H1 (cell line): ENCODE measurements at regions of chr17 and their contacts with region 1.

Region 1: GRCh38 chr17:6479622-6480302 is 35.5 kb downstream of the PIMREG start:
- DNase-seq: no peak
- H3K4me3 ChIP-seq: no peak overlapping the region
- H3K27ac ChIP-seq: no peak overlapping the region
- H3K4me1 ChIP-seq: 0 out of 7 replicates have a peak, but pooled peaks cover 0 to 2% (median 1%) of the 10 kb centered on the region in 4 experiments
- H3K27me3 ChIP-seq: no peaks in the 10 kb centered on the region
- CTCF ChIP-seq: no peak
- EP300 ChIP-seq: no peak
- POLR2A ChIP-seq: no peak
- RAD21 ChIP-seq: no peak

Region 2: DNA sequence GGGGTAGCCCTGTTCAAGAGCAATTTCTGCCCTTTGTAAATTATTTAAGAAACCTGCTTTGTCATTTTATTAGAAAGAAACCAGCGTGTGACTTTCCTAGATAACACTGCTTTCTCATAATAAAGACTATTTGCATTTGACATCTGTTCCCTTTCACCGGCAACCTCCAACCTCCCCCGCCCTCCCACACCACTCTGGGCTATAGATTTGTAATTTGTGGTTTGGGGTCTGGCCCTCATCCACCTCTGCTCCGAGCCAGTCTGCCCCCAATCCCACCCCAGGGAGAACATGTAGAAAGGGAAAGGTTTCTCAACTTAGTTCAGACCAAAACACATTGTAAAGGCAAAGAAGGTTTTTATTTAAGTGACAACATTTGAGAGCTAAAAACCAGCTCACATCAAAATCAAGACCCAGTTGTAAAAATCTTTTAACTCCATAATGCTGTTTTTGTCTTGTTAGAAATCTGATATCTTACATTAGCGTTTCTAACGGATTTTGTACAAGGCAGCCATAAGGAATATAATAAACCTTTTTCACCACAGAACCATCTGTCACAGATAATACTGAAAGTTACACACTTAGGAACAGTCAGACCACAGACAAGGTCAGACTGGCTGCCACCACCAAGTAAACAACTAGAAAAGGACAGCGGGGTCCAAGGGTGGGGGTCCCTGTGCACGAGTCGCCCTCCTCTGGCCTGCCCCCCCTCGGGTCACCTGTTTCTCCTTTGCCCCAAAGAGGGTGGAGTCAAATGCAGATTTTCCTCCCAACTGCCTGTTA is 28.6 kb before region 1 on chr17:
- CTCF ChIA-PET with region 1: no interaction called
- POLR2A ChIA-PET with region 1: no interaction called
- DNase-seq: no peak
- H3K4me3 ChIP-seq: 0 out of 8 replicates have a peak overlapping the region, but pooled peaks of 1 of the 4 experiments have one; percentile 0
- H3K27ac ChIP-seq: no peak overlapping the region
- H3K4me1 ChIP-seq: peaks cover 2 to 42% (median 21%) of the 10 kb centered on the region in 4 experiments
- H3K27me3 ChIP-seq: no peaks in the 10 kb centered on the region; a peak in 3 of 7 replicates
- CTCF ChIP-seq: no peak
- EP300 ChIP-seq: no peak
- POLR2A ChIP-seq: no peak; a peak in 1 of 3 replicates
- RAD21 ChIP-seq: no peak

Region 3: GRCh38 chr17:6468051-6468790 is 11.5 kb before region 1 on chr17:
- CTCF ChIA-PET with region 1: interaction called, 68 read pairs
- POLR2A ChIA-PET with region 1: interaction called, 3 read pairs
- DNase-seq: no peak
- H3K4me3 ChIP-seq: no peak overlapping the region
- H3K27ac ChIP-seq: no peak overlapping the region
- H3K4me1 ChIP-seq: peaks cover 0 to 13% (median 8%) of the 10 kb centered on the region in 4 experiments; a peak in 4 of 7 replicates
- H3K27me3 ChIP-seq: no peaks in the 10 kb centered on the region
- CTCF ChIP-seq: no peak
- EP300 ChIP-seq: no peak
- POLR2A ChIP-seq: no peak
- RAD21 ChIP-seq: no peak